ENCODE measurements at regions of chr6 and their contacts with region 1.

Region 1: DNA sequence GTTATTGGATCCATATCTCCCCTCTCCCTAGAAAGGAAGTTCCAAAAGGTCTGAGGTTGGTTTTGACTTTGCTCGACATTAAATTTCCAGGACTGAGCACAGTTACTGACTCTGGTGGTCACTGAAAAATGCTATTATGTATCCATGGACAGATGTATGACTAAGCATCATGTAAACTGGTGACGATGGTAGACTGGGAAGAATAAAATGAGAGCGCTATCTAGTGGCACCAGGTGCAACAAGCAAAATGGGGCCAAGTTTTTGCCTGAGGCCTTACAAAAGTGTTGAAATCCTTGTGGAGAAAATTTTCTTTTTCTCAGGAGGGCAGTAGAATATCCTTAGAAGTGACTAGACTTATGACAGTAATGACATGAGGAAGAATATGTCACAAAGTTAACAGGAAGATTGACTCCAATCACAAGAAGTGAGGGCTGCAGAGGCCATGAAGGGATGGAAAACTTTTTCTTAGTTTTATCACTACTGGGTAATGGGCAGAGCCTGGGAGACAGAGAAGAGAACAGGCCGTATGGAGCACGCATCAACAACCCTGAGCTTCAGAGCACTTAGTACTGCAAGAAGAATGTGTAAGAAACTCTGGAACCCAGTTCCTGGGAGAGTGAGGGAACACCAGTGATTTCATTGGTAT is 88.9 kb upstream of the ELOVL5 start:
- DNase-seq: peak in 1 of 2 donors; percentile 8
- ATAC-seq: peak in 6 of 8 donors; percentile 44 to 74 (median 62)
- H3K4me3 ChIP-seq: no peak overlapping the region
- H3K27ac ChIP-seq: no peak overlapping the region
- H3K4me1 ChIP-seq: peaks cover 0 to 43% (median 21%) of the 10 kb centered on the region in 9 donors
- H3K27me3 ChIP-seq: no peaks in the 10 kb centered on the region
- CTCF ChIP-seq: peak in 8 of 9 donors; percentile 39 to 65 (median 59)

Region 2: GRCh38 chr6:53284901-53285300 is 152.8 kb before region 1 on chr6:
- intact Hi-C with region 1: loop called in 1 of 10 experiments (anchors 10 kb)
- DNase-seq: no peak
- ATAC-seq: no peak
- H3K4me3 ChIP-seq: no peak overlapping the region
- H3K27ac ChIP-seq: no peak overlapping the region
- H3K4me1 ChIP-seq: peaks cover 3 to 56% (median 35%) of the 10 kb centered on the region in 9 donors
- H3K27me3 ChIP-seq: no peaks in the 10 kb centered on the region
- CTCF ChIP-seq: no peak

Measured in heart right ventricle (tissue), 16 donors.